ENCODE measurements at regions of chr5 and their contacts with region 1.

Region 1: GRCh38 chr5:149141224-149141956 is at the start of gene ABLIM3:
- DNase-seq: peak; percentile 41 to 86 (median 70)
- H3K4me3 ChIP-seq: peak within 1 kb of the TSS in 3 of 4 donors; percentile 29 to 84 (median 81)
- H3K27ac ChIP-seq: peak within 1 kb of the TSS in 4 of 5 donors; percentile 31 to 85 (median 58)
- H3K4me1 ChIP-seq: peaks cover 20 to 27% of the 10 kb centered on the region in 2 donors
- H3K27me3 ChIP-seq: no peaks in the 10 kb centered on the region
- CTCF ChIP-seq: peak; percentile 56 to 95 (median 81)
- POLR2A ChIP-seq: no peak
- total RNA-seq, gene ABLIM3: 1.6 to 27.6 (median 16.8) TPM

Region 2: GRCh38 chr5:149228618-149229297 is 87.4 kb after region 1 on chr5:
- intact Hi-C with region 1: loop called (anchors 5 kb)
- DNase-seq: peak; percentile 39 to 85 (median 72)
- H3K4me3 ChIP-seq: no peak overlapping the region
- H3K27ac ChIP-seq: peak overlapping the region in 1 of 5 donors; percentile 36
- H3K4me1 ChIP-seq: peaks cover 4 to 6% of the 10 kb centered on the region in 2 donors
- H3K27me3 ChIP-seq: no peaks in the 10 kb centered on the region
- CTCF ChIP-seq: peak; percentile 65 to 92 (median 82)
- POLR2A ChIP-seq: no peak